ENCODE measurements at regions of chr5 and their contacts with region 1.

Region 1: GRCh38 chr5:115544436-115545350 is at the start of gene FEM1C:
- DNase-seq: peak; percentile 96
- H3K4me3 ChIP-seq: peak within 1 kb of the TSS; percentile 92
- H3K27ac ChIP-seq: peak within 1 kb of the TSS; percentile 98
- H3K4me1 ChIP-seq: peaks cover 3% of the 10 kb centered on the region
- H3K27me3 ChIP-seq: no peaks in the 10 kb centered on the region
- CTCF ChIP-seq: no peak
- total RNA-seq, gene FEM1C: 13.7 and 15.0 TPM in 2 replicates

Region 2: GRCh38 chr5:115435778-115436712 is 108.6 kb before region 1 on chr5:
- CTCF ChIA-PET with region 1: no interaction called
- POLR2A ChIA-PET with region 1: no interaction called
- intact Hi-C with region 1: no loop called
- DNase-seq: no peak
- H3K4me3 ChIP-seq: no peak overlapping the region
- H3K27ac ChIP-seq: no peak overlapping the region
- H3K4me1 ChIP-seq: no peaks in the 10 kb centered on the region
- H3K27me3 ChIP-seq: no peaks in the 10 kb centered on the region
- CTCF ChIP-seq: no peak

Region 3: DNA sequence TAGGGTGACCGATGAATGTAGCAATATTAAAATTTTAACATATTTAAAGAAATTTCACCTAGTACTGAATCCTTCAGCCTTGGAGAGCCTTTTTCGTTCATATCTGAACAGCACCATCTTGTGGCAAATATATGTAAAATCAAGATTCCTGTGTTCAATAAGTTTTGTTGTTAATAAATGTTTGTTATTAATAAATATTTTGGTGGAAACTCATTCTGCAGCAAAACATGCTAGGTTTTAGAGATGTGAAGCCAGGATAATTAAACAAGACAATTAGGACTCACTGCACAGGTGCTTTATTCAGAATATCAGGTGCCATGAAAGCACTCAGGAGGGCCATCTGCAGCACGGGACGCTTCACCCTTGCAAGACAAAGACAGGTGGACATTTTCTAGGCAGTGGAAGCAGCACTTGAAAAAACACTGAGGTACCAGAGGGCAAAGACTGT is 41.9 kb after region 1 on chr5:
- CTCF ChIA-PET with region 1: no interaction called
- POLR2A ChIA-PET with region 1: no interaction called
- intact Hi-C with region 1: loop called (anchors 2 kb)
- DNase-seq: peak; percentile 50
- H3K4me3 ChIP-seq: no peak overlapping the region
- H3K27ac ChIP-seq: no peak overlapping the region
- H3K4me1 ChIP-seq: no peaks in the 10 kb centered on the region
- H3K27me3 ChIP-seq: no peaks in the 10 kb centered on the region
- CTCF ChIP-seq: peak; percentile 68

Region 4: DNA sequence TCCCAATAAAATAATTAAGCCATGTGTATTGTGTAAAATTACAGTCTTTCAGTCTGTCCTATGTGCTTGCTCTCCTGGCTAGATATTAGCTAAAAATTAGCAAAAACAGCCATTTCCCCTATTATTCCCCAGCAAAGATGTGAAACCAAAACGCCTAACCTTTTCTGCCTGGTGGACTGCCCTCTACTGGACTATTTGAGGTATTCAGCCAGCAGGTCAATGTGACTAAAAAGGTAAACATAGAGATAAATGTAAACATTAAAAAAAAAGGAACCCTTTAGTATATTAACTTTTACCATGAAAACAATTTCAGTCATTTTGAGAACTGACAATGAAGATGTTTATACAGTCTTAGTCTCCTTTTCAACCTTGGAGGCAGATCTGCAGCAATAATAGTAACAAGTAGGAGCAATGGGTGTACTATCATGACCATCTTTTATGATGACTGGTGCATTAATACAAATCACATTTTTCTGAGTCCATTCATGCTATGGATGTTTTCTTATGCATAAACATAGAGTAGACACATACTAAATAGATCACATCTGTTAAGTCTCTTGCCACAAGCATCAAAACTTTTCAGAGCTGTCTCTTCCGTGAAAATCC is 286.6 kb after region 1 on chr5:
- CTCF ChIA-PET with region 1: no interaction called
- POLR2A ChIA-PET with region 1: no interaction called
- intact Hi-C with region 1: loop called (anchors 10 kb)
- DNase-seq: peak; percentile 54
- H3K4me3 ChIP-seq: no peak overlapping the region
- H3K27ac ChIP-seq: no peak overlapping the region
- H3K4me1 ChIP-seq: no peaks in the 10 kb centered on the region
- H3K27me3 ChIP-seq: no peaks in the 10 kb centered on the region
- CTCF ChIP-seq: peak; percentile 78

Region 5: GRCh38 chr5:116885825-116886224 is 1341.1 kb after region 1 on chr5:
- CTCF ChIA-PET with region 1: no interaction called
- POLR2A ChIA-PET with region 1: no interaction called
- intact Hi-C with region 1: no loop called
- DNase-seq: no peak
- H3K4me3 ChIP-seq: no peak overlapping the region
- H3K27ac ChIP-seq: no peak overlapping the region
- H3K4me1 ChIP-seq: no peaks in the 10 kb centered on the region
- H3K27me3 ChIP-seq: no peaks in the 10 kb centered on the region
- CTCF ChIP-seq: no peak

Measured in A673 (cell line).